B cell (primary cell): ENCODE measurements at regions of chr14 and their contacts with region 1.

Region 1: GRCh38 chr14:54566410-54567223 is at the start of gene SAMD4A:
- DNase-seq: peak; percentile 85
- ATAC-seq: peak; percentile 35
- H3K4me3 ChIP-seq: peak within 1 kb of the TSS; percentile 52 to 86 (median 73)
- H3K4me3 Mint-ChIP-seq: peak within 1 kb of the TSS; percentile 96
- H3K27ac ChIP-seq: peak within 1 kb of the TSS; percentile 73 to 85
- H3K27ac Mint-ChIP-seq: peak within 1 kb of the TSS; percentile 96
- H3K4me1 ChIP-seq: peaks cover 21 to 24% of the 10 kb centered on the region in 2 donors
- H3K4me1 Mint-ChIP-seq: peaks cover 27% of the 10 kb centered on the region
- H3K27me3 ChIP-seq: no peaks in the 10 kb centered on the region
- H3K27me3 Mint-ChIP-seq: peaks cover 3% of the 10 kb centered on the region
- CTCF ChIP-seq: peak; percentile 10
- total RNA-seq, gene SAMD4A: 12.7 and 13.7 TPM in 2 replicates

Region 2: GRCh38 chr14:54396493-54397335 is 169.9 kb before region 1 on chr14 and contains the start of gene CDKN3:
- CTCF ChIA-PET with region 1: no interaction called
- POLR2A ChIA-PET with region 1: no interaction called
- intact Hi-C with region 1: loop called (anchors 1 kb)
- DNase-seq: peak; percentile 98
- ATAC-seq: peak; percentile 93
- H3K4me3 ChIP-seq: peak within 1 kb of the TSS; percentile 36 to 92 (median 75)
- H3K4me3 Mint-ChIP-seq: peak within 1 kb of the TSS; percentile 85
- H3K27ac ChIP-seq: no peak within 1 kb of the TSS
- H3K27ac Mint-ChIP-seq: peak within 1 kb of the TSS; percentile 70
- H3K4me1 ChIP-seq: peaks cover 0 to 13% of the 10 kb centered on the region in 2 donors
- H3K4me1 Mint-ChIP-seq: peaks cover 18% of the 10 kb centered on the region
- H3K27me3 ChIP-seq: no peaks in the 10 kb centered on the region
- H3K27me3 Mint-ChIP-seq: no peaks in the 10 kb centered on the region
- CTCF ChIP-seq: peak; percentile 48
- total RNA-seq, gene CDKN3: 0.42 and 0.87 TPM in 2 replicates

Region 3: DNA sequence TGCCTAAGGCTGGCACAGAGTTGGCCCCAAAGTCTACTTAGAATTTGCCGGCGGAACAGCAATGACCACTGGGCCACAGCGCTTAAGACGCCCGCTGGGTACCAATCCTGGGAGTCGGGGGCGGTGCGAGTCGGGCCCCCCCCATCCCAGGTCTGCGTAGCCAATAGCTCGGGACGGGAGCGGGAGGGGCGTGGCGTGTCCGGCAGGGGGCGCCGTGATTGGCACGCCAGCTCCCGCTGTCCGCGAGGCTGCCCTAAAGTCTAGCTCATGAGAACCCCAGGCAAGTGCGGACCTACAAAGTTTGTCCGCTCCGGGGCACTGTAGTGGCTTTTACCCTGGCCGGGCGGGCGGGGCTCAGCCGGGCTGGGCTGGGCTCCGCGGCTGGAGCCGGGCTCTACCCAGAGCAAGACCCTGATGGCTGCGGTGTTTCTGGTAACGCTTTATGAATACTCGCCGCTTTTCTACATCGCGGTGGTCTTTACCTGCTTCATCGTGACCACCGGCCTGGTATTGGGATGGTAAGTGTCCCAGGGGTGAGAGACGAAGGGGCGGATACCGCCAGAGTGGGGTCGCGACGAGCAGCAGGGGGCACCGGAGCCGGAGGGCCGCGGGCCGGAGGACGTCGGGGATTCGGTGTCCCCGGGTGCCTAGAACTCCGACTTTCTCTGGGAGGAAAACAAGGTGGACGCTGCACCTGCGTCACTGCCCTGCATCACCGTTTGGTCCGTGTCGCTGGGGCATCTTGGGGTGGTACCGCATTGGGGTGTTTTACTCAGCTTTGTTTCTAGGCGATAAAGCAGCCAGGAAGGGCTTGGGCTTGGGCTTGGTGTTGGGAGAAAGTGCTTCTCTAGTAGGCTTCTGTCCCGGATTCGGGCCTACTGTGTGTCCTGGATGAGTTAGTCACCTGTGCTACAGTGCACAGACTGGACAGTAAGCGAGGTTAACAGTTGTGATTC is 56.8 kb before region 1 on chr14 and contains the start of gene CGRRF1:
- CTCF ChIA-PET with region 1: interaction called, 8 read pairs
- POLR2A ChIA-PET with region 1: interaction called, 4 read pairs
- intact Hi-C with region 1: loop called (anchors 1 kb)
- DNase-seq: peak; percentile 98
- ATAC-seq: peak; percentile 98
- H3K4me3 ChIP-seq: peak within 1 kb of the TSS; percentile 79 to 99 (median 96)
- H3K4me3 Mint-ChIP-seq: peak within 1 kb of the TSS; percentile 98
- H3K27ac ChIP-seq: peak within 1 kb of the TSS; percentile 81
- H3K27ac Mint-ChIP-seq: peak within 1 kb of the TSS; percentile 94
- H3K4me1 ChIP-seq: peaks cover 21 to 25% of the 10 kb centered on the region in 2 donors
- H3K4me1 Mint-ChIP-seq: peaks cover 44% of the 10 kb centered on the region
- H3K27me3 ChIP-seq: no peaks in the 10 kb centered on the region
- H3K27me3 Mint-ChIP-seq: no peaks in the 10 kb centered on the region
- CTCF ChIP-seq: peak; percentile 57
- total RNA-seq, gene CGRRF1: 15.8 and 17.9 TPM in 2 replicates

Region 4: GRCh38 chr14:54597795-54598443 is 31.3 kb after region 1 on chr14:
- CTCF ChIA-PET with region 1: no interaction called
- POLR2A ChIA-PET with region 1: no interaction called
- intact Hi-C with region 1: no loop called
- DNase-seq: no peak
- ATAC-seq: no peak
- H3K4me3 ChIP-seq: no peak overlapping the region
- H3K4me3 Mint-ChIP-seq: no peak overlapping the region
- H3K27ac ChIP-seq: no peak overlapping the region
- H3K27ac Mint-ChIP-seq: no peak overlapping the region
- H3K4me1 ChIP-seq: peaks cover 0 to 4% of the 10 kb centered on the region in 2 donors
- H3K4me1 Mint-ChIP-seq: peaks cover 2% of the 10 kb centered on the region
- H3K27me3 ChIP-seq: no peaks in the 10 kb centered on the region
- H3K27me3 Mint-ChIP-seq: no peaks in the 10 kb centered on the region
- CTCF ChIP-seq: no peak

Region 5: DNA sequence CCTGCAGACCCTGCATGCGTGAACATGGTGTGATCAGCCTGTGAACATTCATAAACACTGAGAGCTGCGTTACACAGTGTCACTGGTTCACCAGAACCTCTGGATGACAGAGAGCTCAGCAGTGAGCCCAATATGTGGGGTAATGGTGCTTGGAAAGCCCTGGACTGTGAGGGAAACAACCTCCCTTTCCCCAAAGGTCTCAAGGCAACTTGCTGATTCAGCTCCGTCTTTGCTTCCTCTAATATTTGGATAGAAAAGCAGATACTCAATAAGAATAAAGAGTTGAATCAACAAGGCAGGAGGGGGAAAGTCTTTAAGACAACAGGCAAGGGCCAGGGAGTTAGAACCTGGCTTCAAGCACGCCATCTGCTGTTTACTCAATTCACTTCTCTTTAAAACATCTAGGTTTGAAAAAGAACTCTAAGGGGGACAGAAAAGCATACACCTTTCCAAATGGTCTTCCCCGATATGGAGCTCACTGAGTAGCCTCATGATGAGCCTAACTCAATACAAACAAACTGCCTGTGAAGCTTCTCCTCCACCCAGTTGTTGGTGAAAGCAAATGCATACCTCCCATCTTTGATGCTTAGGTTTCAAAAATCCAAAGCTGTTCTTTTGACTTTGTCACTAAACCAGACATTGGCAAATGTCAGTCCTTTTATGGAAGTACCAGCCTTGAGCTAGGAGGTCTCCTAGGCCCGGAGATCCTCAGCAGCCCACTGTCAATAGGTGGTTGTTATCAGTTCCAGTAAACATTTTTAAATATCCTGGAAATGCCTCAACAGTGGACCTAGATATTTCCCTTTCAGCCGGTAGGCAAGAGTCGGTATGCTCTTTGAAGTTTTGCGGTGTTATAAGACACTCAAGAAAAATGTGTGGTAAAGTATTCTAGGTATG is 76.4 kb after region 1 on chr14:
- CTCF ChIA-PET with region 1: interaction called, 40 read pairs
- POLR2A ChIA-PET with region 1: no interaction called
- intact Hi-C with region 1: loop called (anchors 1 kb)
- DNase-seq: peak; percentile 49
- ATAC-seq: peak; percentile 31
- H3K4me3 ChIP-seq: no peak overlapping the region
- H3K4me3 Mint-ChIP-seq: no peak overlapping the region
- H3K27ac ChIP-seq: no peak overlapping the region
- H3K27ac Mint-ChIP-seq: no peak overlapping the region
- H3K4me1 ChIP-seq: no peaks in the 10 kb centered on the region
- H3K4me1 Mint-ChIP-seq: no peaks in the 10 kb centered on the region
- H3K27me3 ChIP-seq: no peaks in the 10 kb centered on the region
- H3K27me3 Mint-ChIP-seq: no peaks in the 10 kb centered on the region
- CTCF ChIP-seq: peak; percentile 36

Region 6: DNA sequence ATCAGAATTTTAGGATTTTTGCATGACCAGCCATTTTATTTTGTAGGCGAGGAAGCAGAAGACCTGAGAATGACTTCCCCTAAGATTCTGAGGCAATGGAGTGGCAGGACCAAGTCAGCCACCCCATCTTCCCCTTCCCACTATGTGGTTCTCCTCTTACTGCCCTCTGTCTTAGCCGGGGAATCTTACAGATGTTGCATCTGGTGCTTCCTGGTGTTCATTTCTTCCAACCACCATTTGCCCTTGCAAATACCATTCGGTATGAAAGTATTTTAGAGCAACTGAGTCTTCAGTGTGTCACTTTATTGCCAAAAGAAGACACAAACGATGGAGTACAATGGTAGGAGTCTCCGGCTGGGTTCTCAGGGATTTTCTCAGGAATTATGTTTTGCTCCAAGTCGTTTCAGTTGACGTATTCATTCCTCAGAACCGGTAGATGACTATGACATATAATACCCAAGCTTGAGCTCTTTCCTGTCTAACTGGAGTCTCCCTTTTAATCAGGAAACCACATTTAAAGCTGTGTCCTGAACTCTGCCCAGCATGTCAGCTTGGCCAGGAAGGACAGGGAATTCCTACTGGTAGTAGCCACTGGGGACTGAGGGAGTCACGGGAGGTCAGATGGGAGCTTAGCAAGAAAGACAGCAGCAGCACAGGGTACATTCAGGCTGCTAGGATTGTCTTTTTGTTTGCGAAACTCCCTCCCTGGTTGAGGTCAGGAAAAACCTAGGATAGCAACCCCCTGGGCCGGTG is 87.3 kb after region 1 on chr14:
- CTCF ChIA-PET with region 1: no interaction called
- POLR2A ChIA-PET with region 1: no interaction called
- intact Hi-C with region 1: no loop called
- DNase-seq: no peak
- ATAC-seq: no peak
- H3K4me3 ChIP-seq: no peak overlapping the region
- H3K4me3 Mint-ChIP-seq: no peak overlapping the region
- H3K27ac ChIP-seq: no peak overlapping the region
- H3K27ac Mint-ChIP-seq: no peak overlapping the region
- H3K4me1 ChIP-seq: peaks cover 4% of the 10 kb centered on the region in 2 donors
- H3K4me1 Mint-ChIP-seq: peaks cover 6% of the 10 kb centered on the region
- H3K27me3 ChIP-seq: no peaks in the 10 kb centered on the region
- H3K27me3 Mint-ChIP-seq: no peaks in the 10 kb centered on the region
- CTCF ChIP-seq: no peak

Region 7: GRCh38 chr14:54730156-54730961 is 163.7 kb after region 1 on chr14:
- CTCF ChIA-PET with region 1: interaction called, 82 read pairs
- POLR2A ChIA-PET with region 1: no interaction called
- intact Hi-C with region 1: no loop called
- DNase-seq: peak; percentile 78
- ATAC-seq: peak; percentile 97
- H3K4me3 ChIP-seq: peak overlapping the region in 4 of 5 experiments; percentile 1 to 48 (median 39)
- H3K4me3 Mint-ChIP-seq: peak overlapping the region; percentile 82
- H3K27ac ChIP-seq: peak overlapping the region; percentile 45 to 71
- H3K27ac Mint-ChIP-seq: peak overlapping the region; percentile 89
- H3K4me1 ChIP-seq: peaks cover 15 to 20% of the 10 kb centered on the region in 2 donors
- H3K4me1 Mint-ChIP-seq: peaks cover 18% of the 10 kb centered on the region
- H3K27me3 ChIP-seq: no peaks in the 10 kb centered on the region
- H3K27me3 Mint-ChIP-seq: no peaks in the 10 kb centered on the region
- CTCF ChIP-seq: no peak

Region 8: GRCh38 chr14:54805521-54806322 is 239.1 kb after region 1 on chr14:
- CTCF ChIA-PET with region 1: interaction called, 85 read pairs
- POLR2A ChIA-PET with region 1: no interaction called
- intact Hi-C with region 1: loop called (anchors 1 kb)
- DNase-seq: peak; percentile 84
- ATAC-seq: peak; percentile 86
- H3K4me3 ChIP-seq: no peak overlapping the region
- H3K4me3 Mint-ChIP-seq: no peak overlapping the region
- H3K27ac ChIP-seq: no peak overlapping the region
- H3K27ac Mint-ChIP-seq: no peak overlapping the region
- H3K4me1 ChIP-seq: peaks cover 5 to 7% of the 10 kb centered on the region in 2 donors
- H3K4me1 Mint-ChIP-seq: peaks cover 6% of the 10 kb centered on the region
- H3K27me3 ChIP-seq: peaks cover 0 to 6% (median 0%) of the 10 kb centered on the region in 4 experiments
- H3K27me3 Mint-ChIP-seq: peaks cover 20% of the 10 kb centered on the region
- CTCF ChIP-seq: peak; percentile 94

Region 9: DNA sequence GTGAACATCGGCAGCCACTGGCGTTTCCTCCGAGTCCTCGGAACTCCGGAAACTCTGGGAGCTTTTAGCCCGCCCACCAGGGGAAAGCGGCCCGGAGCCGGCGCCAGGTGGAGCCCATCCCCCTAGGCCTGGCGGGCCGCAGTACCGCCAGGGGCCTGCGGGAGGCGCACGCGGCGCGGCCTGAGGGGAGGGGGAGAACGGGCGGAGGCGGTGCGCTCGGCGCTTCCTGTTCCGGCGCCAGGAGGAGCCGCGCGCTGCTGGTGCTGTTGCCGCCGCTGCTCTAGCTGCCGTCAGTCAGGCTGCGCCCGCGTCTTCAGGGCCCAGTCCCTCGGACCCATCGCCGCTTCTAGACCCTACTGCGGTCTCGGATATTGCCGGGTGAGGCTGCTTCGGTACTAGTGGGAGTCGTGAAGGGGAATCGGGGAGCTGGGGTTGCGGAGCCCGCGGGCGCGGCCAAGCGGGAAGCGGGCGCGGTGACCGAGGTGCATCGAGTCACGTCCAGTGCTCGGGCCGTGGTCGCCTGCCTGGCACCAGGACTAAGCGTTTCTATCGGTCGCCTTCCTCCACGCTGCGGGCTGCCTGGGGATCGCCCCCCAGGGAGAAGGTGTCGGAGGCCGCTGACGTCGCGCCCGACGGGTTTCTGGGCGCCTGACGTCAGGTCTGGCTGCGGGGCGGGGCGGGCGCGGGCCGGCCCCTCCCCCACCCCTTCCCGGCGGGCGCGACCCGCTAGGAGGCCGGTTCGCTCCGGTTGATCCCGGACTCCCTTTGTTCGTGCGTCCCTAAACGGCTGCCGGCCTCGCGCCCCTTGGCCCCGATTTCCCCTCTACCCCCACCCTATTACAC is 485.0 kb after region 1 on chr14 and contains the start of gene MAPK1IP1L:
- CTCF ChIA-PET with region 1: no interaction called
- POLR2A ChIA-PET with region 1: no interaction called
- intact Hi-C with region 1: loop called (anchors 2 kb)
- DNase-seq: peak; percentile 95
- ATAC-seq: peak; percentile 93
- H3K4me3 ChIP-seq: peak within 1 kb of the TSS; percentile 69 to 99 (median 97)
- H3K4me3 Mint-ChIP-seq: peak within 1 kb of the TSS; percentile 93
- H3K27ac ChIP-seq: peak within 1 kb of the TSS; percentile 100
- H3K27ac Mint-ChIP-seq: peak within 1 kb of the TSS; percentile 95
- H3K4me1 ChIP-seq: peaks cover 18 to 25% of the 10 kb centered on the region in 2 donors
- H3K4me1 Mint-ChIP-seq: peaks cover 39% of the 10 kb centered on the region
- H3K27me3 ChIP-seq: no peaks in the 10 kb centered on the region
- H3K27me3 Mint-ChIP-seq: no peaks in the 10 kb centered on the region
- CTCF ChIP-seq: peak; percentile 99
- total RNA-seq, gene MAPK1IP1L: 108 and 116 TPM in 2 replicates